ENCODE measurements at regions of chr6 and their contacts with region 1.

Region 1: GRCh38 chr6:82251942-82252341 is 4.4 kb upstream of the IBTK start:
- DNase-seq: no peak
- ATAC-seq: no peak
- H3K4me3 ChIP-seq: no peak overlapping the region
- H3K27ac ChIP-seq: no peak overlapping the region
- H3K4me1 ChIP-seq: no peaks in the 10 kb centered on the region
- H3K27me3 ChIP-seq: no peaks in the 10 kb centered on the region
- CTCF ChIP-seq: peak; percentile 34

Region 2: DNA sequence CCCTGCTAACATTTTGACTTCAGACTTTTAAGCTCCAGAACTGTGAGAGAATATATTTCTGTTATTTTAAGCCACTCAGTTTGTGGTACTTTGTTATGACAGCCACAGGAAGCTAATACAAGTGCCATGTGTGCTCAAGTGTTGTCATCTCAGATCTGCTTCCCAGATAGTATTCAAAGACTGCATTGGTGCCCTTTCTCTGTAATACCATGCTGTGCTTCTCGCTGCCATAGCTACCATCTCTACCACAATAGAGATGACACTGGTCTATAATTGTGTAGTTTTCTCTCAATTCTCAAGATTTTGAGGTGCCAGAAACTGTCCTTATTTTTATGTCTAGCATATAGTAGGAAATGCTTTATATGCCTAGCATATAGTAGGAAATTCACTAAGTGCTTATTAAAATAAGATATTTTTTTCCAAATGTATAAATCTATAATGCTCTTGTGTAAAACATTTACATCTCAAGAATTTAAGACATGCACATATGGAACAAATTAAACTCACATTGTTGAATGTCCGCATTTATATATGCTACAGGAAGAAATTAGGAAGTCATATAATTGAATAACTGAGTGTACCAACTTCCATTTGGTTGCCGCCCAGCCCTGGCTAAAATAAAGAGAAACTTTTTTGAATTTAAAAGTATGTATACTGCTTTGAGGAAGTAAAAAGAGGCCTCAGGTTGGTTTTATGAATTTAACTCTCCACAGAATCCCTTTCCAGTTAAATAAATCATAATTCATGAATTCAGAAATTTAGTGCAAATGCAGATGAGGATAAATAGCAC is 189.3 kb after region 1 on chr6:
- intact Hi-C with region 1: no loop called
- DNase-seq: no peak
- ATAC-seq: no peak
- H3K4me3 ChIP-seq: no peak overlapping the region
- H3K27ac ChIP-seq: no peak overlapping the region
- H3K4me1 ChIP-seq: no peaks in the 10 kb centered on the region
- H3K27me3 ChIP-seq: no peaks in the 10 kb centered on the region
- CTCF ChIP-seq: no peak

Region 3: GRCh38 chr6:83057705-83058321 is 805.9 kb after region 1 on chr6:
- intact Hi-C with region 1: loop called (anchors 5 kb)
- DNase-seq: no peak
- ATAC-seq: peak in 2 of 4 donors; percentile 53 to 69
- H3K4me3 ChIP-seq: no peak overlapping the region
- H3K27ac ChIP-seq: no peak overlapping the region
- H3K4me1 ChIP-seq: peaks cover 2% of the 10 kb centered on the region
- H3K27me3 ChIP-seq: no peaks in the 10 kb centered on the region
- CTCF ChIP-seq: peak; percentile 54

Measured in psoas muscle (tissue), 8 donors.